PC-3 (cell line): ENCODE measurements at regions of chr12 and their contacts with region 1.

Region 1: GRCh38 chr12:68807576-68808387 is at the start of gene MDM2:
- DNase-seq: peak; percentile 93
- ATAC-seq: peak; percentile 82
- H3K4me3 ChIP-seq: peak within 1 kb of the TSS; percentile 81
- H3K27ac ChIP-seq: peak within 1 kb of the TSS; percentile 95
- H3K4me1 ChIP-seq: peaks cover 15% of the 10 kb centered on the region
- H3K27me3 ChIP-seq: no peaks in the 10 kb centered on the region
- CTCF ChIP-seq: peak; percentile 64; the same call in 1 of the 2 replicates
- total RNA-seq, gene MDM2: 43.0 and 86.4 TPM in 2 replicates

Region 2: GRCh38 chr12:68745904-68746571 is 61.7 kb before region 1 on chr12 and contains the start of gene SLC35E3:
- CTCF ChIA-PET with region 1: interaction called, 3 read pairs
- POLR2A ChIA-PET with region 1: interaction called, 4 read pairs
- intact Hi-C with region 1: loop called (anchors 1 kb)
- DNase-seq: peak; percentile 92
- ATAC-seq: peak; percentile 96
- H3K4me3 ChIP-seq: peak within 1 kb of the TSS; percentile 74
- H3K27ac ChIP-seq: peak within 1 kb of the TSS; percentile 40
- H3K4me1 ChIP-seq: peaks cover 7% of the 10 kb centered on the region; the same call in 1 of the 2 replicates
- H3K27me3 ChIP-seq: no peaks in the 10 kb centered on the region
- CTCF ChIP-seq: no peak
- total RNA-seq, gene SLC35E3: 2.2 and 2.6 TPM in 2 replicates

Region 3: DNA sequence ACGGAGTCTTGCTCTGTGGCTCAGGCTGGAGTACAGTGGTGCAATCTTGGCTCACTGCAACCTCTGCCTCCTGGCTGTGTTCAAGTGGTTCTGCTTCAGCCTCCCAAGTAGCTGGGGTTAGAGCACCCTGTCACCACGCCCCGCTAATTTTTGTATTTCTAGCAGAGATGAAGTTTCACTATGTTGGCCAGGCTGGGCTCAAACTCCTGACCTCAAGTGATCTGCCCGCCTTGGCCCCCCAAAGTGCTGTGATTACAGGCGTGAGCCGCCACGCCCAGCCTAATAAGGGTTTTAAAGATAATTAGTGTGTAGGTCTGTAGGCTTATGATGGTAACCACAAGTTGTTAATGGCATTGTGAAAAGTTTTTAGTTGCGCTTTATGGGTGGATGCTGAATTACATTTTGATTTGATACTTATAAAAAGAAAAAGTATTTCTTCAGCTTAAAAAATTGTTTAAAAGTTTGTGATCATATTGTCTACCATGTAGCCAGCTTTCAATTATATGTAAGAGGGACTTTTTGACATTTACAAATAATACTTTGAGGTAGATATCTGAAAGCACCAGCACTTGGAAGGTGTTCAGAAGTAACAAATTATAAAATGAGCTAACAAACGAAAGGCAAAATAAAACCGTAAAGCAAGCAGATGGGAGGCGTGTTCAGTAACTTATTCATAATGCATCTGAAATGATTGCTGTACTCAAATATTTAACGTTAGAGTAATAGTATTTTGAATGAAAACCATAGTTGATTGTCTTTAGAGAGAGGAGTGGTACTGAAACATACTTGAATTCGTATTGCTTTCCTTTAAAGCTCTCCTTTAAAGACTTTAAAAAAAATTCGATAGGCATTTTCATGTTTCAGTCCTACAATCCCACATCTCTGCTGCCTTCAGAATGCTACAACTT is 37.3 kb after region 1 on chr12:
- CTCF ChIA-PET with region 1: no interaction called
- POLR2A ChIA-PET with region 1: no interaction called
- intact Hi-C with region 1: no loop called
- DNase-seq: no peak
- ATAC-seq: no peak
- H3K4me3 ChIP-seq: no peak overlapping the region
- H3K27ac ChIP-seq: no peak overlapping the region
- H3K4me1 ChIP-seq: no peaks in the 10 kb centered on the region
- H3K27me3 ChIP-seq: no peaks in the 10 kb centered on the region
- CTCF ChIP-seq: no peak